PC-3 (cell line): ENCODE measurements at regions of chr2 and their contacts with region 1.

Region 1: GRCh38 chr2:164992818-164993217 is 37.5 kb upstream of the SLC38A11 start:
- DNase-seq: peak; percentile 90
- ATAC-seq: peak; percentile 60
- H3K4me3 ChIP-seq: no peak overlapping the region
- H3K27ac ChIP-seq: no peak overlapping the region
- H3K4me1 ChIP-seq: peaks cover 7% of the 10 kb centered on the region; the same call in 1 of the 2 replicates
- H3K27me3 ChIP-seq: no peaks in the 10 kb centered on the region
- CTCF ChIP-seq: peak; percentile 67

Region 2: DNA sequence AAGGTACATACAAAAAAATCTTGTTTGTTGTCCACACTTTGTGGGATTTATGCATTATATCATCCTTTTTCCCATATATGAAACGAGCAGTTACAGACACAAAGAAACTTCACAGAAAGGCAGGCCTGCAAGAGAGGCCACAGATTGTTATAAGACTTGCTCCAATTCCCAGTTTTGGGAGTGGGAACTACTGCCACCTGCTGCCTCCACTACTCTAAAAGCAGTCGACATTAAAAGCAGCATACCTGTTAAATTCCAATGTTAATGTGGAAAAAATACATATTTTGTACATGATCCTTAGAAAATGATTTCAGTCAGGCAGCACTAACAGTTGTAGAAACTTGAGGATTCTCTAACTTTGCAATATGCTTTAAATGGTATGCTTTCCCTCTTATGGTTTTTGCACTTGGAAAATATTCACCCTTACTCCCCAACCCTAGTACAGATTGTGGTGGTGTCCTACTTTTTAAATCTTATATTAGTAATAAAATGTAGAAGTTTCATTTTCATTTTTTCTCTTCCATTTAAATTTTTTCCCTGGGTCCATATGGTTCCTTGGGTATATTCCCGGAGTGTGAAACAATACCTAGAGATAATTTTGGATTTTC is 75.4 kb before region 1 on chr2:
- CTCF ChIA-PET with region 1: no interaction called
- POLR2A ChIA-PET with region 1: no interaction called
- intact Hi-C with region 1: no loop called
- DNase-seq: peak; percentile 67
- ATAC-seq: peak; percentile 67
- H3K4me3 ChIP-seq: no peak overlapping the region
- H3K27ac ChIP-seq: no peak overlapping the region
- H3K4me1 ChIP-seq: peaks cover 12% of the 10 kb centered on the region
- H3K27me3 ChIP-seq: no peaks in the 10 kb centered on the region
- CTCF ChIP-seq: peak; percentile 71

Region 3: DNA sequence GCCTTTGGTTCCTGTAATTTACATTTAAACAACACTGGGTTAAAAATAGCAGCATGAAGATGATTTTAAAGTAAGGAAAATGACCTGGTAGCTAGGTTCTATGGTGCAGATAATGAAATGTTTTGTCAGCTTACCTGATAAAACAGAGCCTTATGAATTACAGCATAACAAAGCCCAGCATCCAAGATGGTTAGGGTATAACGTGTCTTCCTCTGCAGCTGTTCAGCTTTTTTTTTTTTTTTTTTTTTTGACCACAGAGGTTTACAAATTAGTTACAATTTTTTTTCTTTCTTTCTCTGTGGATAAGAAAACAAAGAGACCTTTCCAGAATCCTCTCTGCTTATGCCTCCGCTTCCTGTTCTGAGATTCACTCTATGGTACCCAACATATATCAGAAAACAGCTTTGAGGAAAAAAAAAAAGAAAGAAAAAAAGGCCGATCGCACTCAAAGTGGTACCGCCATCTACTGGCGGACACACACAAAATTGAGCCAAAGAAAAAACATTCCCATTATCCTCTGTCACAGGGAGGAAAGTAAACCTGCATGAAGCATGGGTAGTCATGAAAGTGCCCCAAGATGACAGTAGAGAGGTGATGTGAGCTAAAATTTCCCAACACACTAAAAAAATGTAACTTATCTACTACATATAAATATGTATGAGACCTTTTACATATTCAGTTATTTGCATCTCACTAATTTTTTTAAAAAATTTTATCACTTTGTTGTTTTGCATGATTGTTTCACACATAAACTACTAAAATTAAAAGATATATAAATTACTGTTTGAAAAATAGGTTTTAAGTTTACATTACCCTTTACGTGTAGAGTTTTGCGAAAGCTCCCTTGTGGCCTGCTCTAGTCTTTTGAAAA is 211.1 kb after region 1 on chr2 and contains the start of gene SCN3A:
- CTCF ChIA-PET with region 1: interaction called, 12 read pairs
- POLR2A ChIA-PET with region 1: no interaction called
- intact Hi-C with region 1: loop called (anchors 2 kb)
- DNase-seq: peak; percentile 71
- ATAC-seq: peak; percentile 57
- H3K4me3 ChIP-seq: no peak within 1 kb of the TSS
- H3K27ac ChIP-seq: no peak within 1 kb of the TSS
- H3K4me1 ChIP-seq: no peaks in the 10 kb centered on the region
- H3K27me3 ChIP-seq: peaks cover 22% of the 10 kb centered on the region
- CTCF ChIP-seq: peak; percentile 83
- total RNA-seq, gene SCN3A: 0.07 and 0.12 TPM in 2 replicates

Region 4: GRCh38 chr2:165293440-165294353 is 300.9 kb after region 1 on chr2:
- CTCF ChIA-PET with region 1: no interaction called
- POLR2A ChIA-PET with region 1: no interaction called
- intact Hi-C with region 1: loop called (anchors 1 kb)
- DNase-seq: peak; percentile 90
- ATAC-seq: peak; percentile 100
- H3K4me3 ChIP-seq: peak overlapping the region; percentile 46; the same call in 1 of the 2 replicates
- H3K27ac ChIP-seq: no peak overlapping the region
- H3K4me1 ChIP-seq: no peaks in the 10 kb centered on the region; the same call in 1 of the 2 replicates
- H3K27me3 ChIP-seq: peaks cover 5% of the 10 kb centered on the region; the same call in 1 of the 2 replicates
- CTCF ChIP-seq: peak; percentile 70

Region 5: DNA sequence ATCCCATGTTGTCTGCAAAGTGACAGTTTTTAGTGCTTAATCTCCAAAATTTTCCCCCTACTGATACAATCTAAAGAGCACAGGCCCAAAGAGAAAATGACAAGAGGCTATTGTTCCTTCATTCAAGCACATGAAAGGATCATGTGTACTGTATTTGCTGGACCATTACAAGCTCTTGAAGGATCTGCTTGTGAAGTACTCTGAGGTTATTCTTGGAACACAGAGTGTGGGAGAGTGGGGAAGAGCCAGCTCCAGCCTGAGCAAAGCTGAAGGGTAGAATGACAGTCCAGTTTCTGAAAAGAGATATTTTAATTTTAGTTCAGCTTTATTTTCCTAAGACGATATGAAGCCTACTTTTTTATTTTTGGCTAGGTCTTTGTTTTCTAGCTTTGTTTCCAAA is 689.0 kb after region 1 on chr2:
- CTCF ChIA-PET with region 1: no interaction called
- POLR2A ChIA-PET with region 1: no interaction called
- intact Hi-C with region 1: no loop called
- DNase-seq: no peak
- ATAC-seq: no peak
- H3K4me3 ChIP-seq: no peak overlapping the region
- H3K27ac ChIP-seq: no peak overlapping the region
- H3K4me1 ChIP-seq: no peaks in the 10 kb centered on the region
- H3K27me3 ChIP-seq: no peaks in the 10 kb centered on the region
- CTCF ChIP-seq: no peak